HepG2 (cell line): ENCODE measurements at regions of chr16 and their contacts with region 1.

Region 1: GRCh38 chr16:46973207-46973995 is at the start of gene DNAJA2:
- DNase-seq: peak; percentile 85
- ATAC-seq: peak; percentile 93
- H3K4me3 ChIP-seq: peak within 1 kb of the TSS; percentile 74 to 98 (median 96)
- H3K27ac ChIP-seq: peak within 1 kb of the TSS; percentile 88
- H3K4me1 ChIP-seq: peaks cover 66% of the 10 kb centered on the region
- H3K27me3 ChIP-seq: no peaks in the 10 kb centered on the region; a peak in 1 of 5 replicates
- CTCF ChIP-seq: 0 out of 2 replicates have a peak, but pooled peaks have one; percentile 15
- EP300 ChIP-seq: peak; percentile 8 to 22; a peak in 2 of 4 replicates
- POLR2A ChIP-seq: peak; percentile 92 to 93
- RAD21 ChIP-seq: no peak; the same call in 1 of the 2 replicates
- total RNA-seq, gene DNAJA2: 176 and 181 TPM in 2 replicates

Region 2: DNA sequence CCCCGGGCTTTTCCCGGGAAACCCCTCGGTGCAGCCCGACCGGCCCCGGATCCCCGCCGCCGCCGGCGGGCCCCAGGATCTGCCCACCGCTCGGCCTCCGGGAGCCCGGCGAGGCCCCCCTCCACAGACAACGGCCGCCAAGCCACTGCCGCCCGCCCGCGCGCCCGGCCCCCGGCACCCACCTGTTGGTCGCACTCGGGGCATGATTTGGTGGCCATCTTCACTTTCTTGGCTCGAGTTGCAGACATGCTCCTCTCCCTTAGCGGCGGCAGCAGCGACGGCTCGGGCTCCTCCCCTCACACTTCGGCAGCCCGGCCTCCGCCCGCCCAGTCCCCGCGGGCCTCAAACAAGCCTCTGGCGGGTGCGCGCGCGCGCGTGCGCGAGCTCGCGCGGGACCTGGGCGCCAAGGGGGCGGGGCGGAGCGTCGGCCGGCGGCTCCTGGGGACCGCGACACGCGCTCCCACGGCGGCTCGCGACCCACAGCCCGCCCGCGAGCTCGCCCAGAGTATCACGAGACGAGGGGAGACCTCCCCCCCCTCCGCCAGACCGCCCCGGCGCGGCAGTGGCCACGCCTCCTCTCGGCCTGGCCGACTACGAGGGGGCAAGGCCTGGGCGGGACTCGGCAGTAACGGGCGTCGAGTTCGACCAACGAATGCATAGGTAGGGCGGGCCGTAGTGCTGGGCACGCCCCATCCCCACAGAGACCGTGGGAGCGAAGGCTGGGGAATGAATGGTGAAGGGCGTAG is 142.3 kb before region 1 on chr16 and contains the start of gene C16orf87:
- CTCF ChIA-PET with region 1: no interaction called
- POLR2A ChIA-PET with region 1: no interaction called
- in situ Hi-C with region 1: no loop called
- intact Hi-C with region 1: loop called (anchors 5 kb)
- DNase-seq: peak; percentile 89
- ATAC-seq: peak; percentile 96
- H3K4me3 ChIP-seq: peak within 1 kb of the TSS; percentile 85 to 97 (median 87)
- H3K27ac ChIP-seq: peak within 1 kb of the TSS; percentile 85
- H3K4me1 ChIP-seq: peaks cover 55% of the 10 kb centered on the region
- H3K27me3 ChIP-seq: no peaks in the 10 kb centered on the region
- CTCF ChIP-seq: no peak
- EP300 ChIP-seq: 0 out of 4 replicates have a peak, but pooled peaks of 1 of the 2 experiments have one; percentile 17
- POLR2A ChIP-seq: peak; percentile 60 to 76
- RAD21 ChIP-seq: no peak
- total RNA-seq, gene C16orf87: 19.5 and 27.6 TPM in 2 replicates

Region 3: GRCh38 chr16:46947900-46948547 is 25.4 kb before region 1 on chr16:
- CTCF ChIA-PET with region 1: interaction called, 3 read pairs
- POLR2A ChIA-PET with region 1: interaction called, 20 read pairs
- in situ Hi-C with region 1: no loop called
- intact Hi-C with region 1: loop called (anchors 2 kb)
- DNase-seq: peak; percentile 71
- ATAC-seq: peak; percentile 80
- H3K4me3 ChIP-seq: peak overlapping the region; percentile 1 to 47 (median 15); a peak in 5 of 6 replicates
- H3K27ac ChIP-seq: peak overlapping the region; percentile 56
- H3K4me1 ChIP-seq: peaks cover 42% of the 10 kb centered on the region
- H3K27me3 ChIP-seq: no peaks in the 10 kb centered on the region
- CTCF ChIP-seq: peak; percentile 85
- EP300 ChIP-seq: no peak
- POLR2A ChIP-seq: no peak
- RAD21 ChIP-seq: peak; percentile 91

Region 4: DNA sequence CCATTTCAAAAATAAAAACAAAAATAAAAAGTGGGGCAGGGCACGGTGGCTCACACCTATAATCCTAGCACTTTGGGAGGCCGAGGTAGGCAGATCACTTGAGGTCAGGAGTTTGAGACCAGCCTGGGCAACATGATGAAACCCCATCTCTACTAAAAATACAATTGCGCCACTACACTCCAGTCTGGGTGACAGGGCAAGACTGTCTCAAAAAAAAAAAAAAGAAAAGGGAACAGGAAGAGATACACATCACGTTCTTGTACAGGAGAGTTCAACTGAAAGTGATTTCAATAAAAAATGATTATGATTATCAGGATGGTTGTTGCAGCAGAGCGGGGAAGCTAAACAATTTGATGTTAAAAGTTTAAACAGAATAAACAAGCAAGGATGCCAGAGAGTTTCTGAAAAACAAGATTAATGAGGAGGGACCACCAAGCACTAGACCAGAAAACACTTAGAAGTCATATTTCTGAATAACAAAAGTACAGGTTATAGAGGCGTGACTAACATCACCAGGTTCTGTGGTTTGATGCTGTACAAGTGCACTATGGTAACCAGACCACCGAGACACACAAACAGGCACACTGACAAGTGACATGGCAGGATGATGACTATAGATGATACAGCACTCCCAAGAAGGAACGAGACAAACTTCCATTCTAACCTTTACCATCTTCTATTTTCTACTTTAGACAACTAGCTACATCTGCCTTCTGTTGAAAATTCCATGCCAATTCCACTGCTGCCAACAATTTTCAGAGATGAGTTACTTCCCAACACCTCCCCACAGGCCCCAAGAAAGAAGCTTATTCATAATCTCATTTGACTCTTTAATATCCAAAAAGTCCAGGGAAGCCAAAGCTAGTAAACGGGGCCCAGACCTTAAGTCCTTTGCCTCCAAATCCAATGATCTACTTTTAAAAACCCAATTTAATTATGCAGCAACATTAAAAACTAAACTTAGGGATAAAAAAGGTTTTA is 11.7 kb before region 1 on chr16:
- CTCF ChIA-PET with region 1: no interaction called
- POLR2A ChIA-PET with region 1: interaction called, 11 read pairs
- in situ Hi-C with region 1: no loop called
- intact Hi-C with region 1: no loop called
- DNase-seq: no peak
- ATAC-seq: no peak
- H3K4me3 ChIP-seq: no peak overlapping the region
- H3K27ac ChIP-seq: no peak overlapping the region
- H3K4me1 ChIP-seq: peaks cover 12% of the 10 kb centered on the region
- H3K27me3 ChIP-seq: no peaks in the 10 kb centered on the region
- CTCF ChIP-seq: no peak
- EP300 ChIP-seq: no peak
- POLR2A ChIP-seq: no peak
- RAD21 ChIP-seq: no peak

Region 5: DNA sequence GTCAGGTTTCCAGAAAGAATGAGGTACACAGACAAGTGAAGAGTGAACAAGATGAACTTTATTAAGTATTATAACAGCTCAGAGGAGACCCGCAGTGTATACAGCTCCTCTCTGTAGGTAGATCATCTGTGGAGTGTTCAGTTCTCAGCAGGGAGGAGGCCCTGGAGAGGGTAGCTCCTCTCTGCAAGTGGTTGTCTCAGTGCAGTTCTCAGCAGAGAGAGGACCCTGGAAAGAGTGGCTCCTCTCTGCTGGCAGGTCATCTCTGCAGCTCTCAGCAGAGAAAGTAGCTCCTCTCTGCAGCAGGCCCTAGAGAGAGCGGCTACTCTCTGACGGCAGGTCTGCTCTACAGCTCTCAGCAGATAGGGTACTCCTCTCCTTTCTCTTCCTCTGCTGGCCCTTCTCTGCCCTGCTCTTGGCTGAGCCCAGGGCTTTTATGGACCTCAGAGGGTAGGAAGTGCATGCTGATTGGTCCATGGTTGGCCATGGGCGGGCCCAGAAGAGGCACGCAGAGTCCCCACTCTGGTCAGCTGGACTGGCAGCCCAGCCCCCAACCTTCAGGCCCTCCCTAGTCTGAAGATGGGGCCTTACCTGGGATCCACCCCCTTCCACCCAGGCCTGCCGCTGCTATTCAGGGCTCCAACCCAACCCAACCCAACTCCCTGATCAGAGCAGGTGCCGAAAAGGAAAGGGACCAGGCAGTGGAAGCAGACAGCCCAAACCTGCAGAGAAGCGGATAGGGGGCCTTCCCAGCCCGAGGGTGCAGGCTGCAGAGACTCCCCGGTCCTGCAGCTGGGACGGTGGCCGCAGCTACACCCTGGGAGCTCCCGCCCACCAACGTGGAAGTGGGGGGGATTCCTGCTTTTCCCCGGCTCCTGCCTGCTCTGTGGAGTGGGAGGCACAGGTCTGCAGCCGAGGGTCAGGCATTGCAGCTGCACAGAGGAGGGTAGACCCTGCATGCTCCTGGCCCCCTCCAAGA is 18.6 kb after region 1 on chr16:
- CTCF ChIA-PET with region 1: no interaction called
- POLR2A ChIA-PET with region 1: interaction called, 49 read pairs
- in situ Hi-C with region 1: no loop called
- intact Hi-C with region 1: no loop called
- DNase-seq: peak; percentile 48
- ATAC-seq: peak; percentile 91
- H3K4me3 ChIP-seq: peak overlapping the region; percentile 24 to 68 (median 40); a peak in 4 of 6 replicates
- H3K27ac ChIP-seq: no peak overlapping the region
- H3K4me1 ChIP-seq: peaks cover 11% of the 10 kb centered on the region; the same call in 1 of the 2 replicates
- H3K27me3 ChIP-seq: no peaks in the 10 kb centered on the region; a peak in 1 of 5 replicates
- CTCF ChIP-seq: no peak
- EP300 ChIP-seq: no peak
- POLR2A ChIP-seq: peak; percentile 86 to 90
- RAD21 ChIP-seq: no peak

Region 6: DNA sequence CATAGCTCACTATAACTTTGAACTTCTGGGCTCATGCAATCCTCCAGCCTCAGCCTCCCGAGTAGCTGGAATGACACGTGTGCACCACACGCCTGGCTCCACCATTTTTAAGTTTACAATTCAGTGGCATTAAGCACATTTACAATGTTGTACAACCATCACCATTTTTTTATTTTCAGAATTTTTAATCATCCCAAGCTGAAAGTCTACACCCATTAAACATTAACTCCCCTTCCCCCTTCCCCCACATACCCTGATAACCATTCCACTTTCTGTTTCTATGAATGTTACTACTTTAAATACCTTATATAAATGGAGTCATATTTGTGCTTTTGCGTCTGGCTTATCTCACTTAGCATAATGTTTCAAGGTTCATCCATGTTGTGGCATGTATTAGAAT is 152.4 kb after region 1 on chr16:
- CTCF ChIA-PET with region 1: no interaction called
- POLR2A ChIA-PET with region 1: no interaction called
- in situ Hi-C with region 1: no loop called
- intact Hi-C with region 1: no loop called
- DNase-seq: no peak
- ATAC-seq: no peak
- H3K4me3 ChIP-seq: no peak overlapping the region
- H3K27ac ChIP-seq: no peak overlapping the region
- H3K4me1 ChIP-seq: peaks cover 6% of the 10 kb centered on the region; the same call in 1 of the 2 replicates
- H3K27me3 ChIP-seq: no peaks in the 10 kb centered on the region
- CTCF ChIP-seq: no peak
- EP300 ChIP-seq: no peak
- POLR2A ChIP-seq: no peak
- RAD21 ChIP-seq: no peak